Transverse colon (tissue), 4 donors: ENCODE measurements at regions of chr12 and their contacts with region 1.

Region 1: DNA sequence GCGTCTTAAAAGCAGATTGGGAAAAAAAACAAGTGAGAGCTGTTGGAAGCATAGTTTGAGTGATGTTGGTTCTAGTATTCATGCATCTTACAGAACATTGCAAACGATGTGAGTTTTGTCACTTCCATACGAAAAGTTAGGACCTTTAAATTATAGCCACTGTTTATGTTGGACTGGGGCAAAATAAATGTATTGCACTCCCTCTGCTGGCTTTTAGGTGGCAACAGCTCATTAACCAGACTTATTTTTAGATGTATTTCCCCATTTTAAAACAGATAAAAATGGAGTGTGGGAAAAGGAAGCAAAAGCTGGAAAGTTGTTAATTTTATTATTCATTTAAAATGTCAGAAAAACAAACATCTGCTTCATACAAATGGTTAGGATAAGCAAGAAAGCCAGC is 111.9 kb downstream of the LGR5 start:
- DNase-seq: no peak
- H3K4me3 ChIP-seq: no peak overlapping the region
- H3K27ac ChIP-seq: no peak overlapping the region
- H3K4me1 ChIP-seq: no peaks in the 10 kb centered on the region
- H3K27me3 ChIP-seq: no peaks in the 10 kb centered on the region
- CTCF ChIP-seq: peak in 4 of 5 experiments; percentile 13 to 28 (median 15)
- EP300 ChIP-seq: no peak
- POLR2A ChIP-seq: no peak

Region 2: GRCh38 chr12:71415336-71416231 is 135.9 kb before region 1 on chr12:
- in situ Hi-C with region 1: loop called in 1 of 4 experiments (anchors 10 kb)
- intact Hi-C with region 1: no loop called
- DNase-seq: peak; percentile 11
- H3K4me3 ChIP-seq: no peak overlapping the region
- H3K27ac ChIP-seq: no peak overlapping the region
- H3K4me1 ChIP-seq: peaks cover 0 to 2% (median 0%) of the 10 kb centered on the region in 4 donors
- H3K27me3 ChIP-seq: no peaks in the 10 kb centered on the region
- CTCF ChIP-seq: peak; percentile 59 to 75 (median 63)
- EP300 ChIP-seq: no peak
- POLR2A ChIP-seq: no peak

Region 3: DNA sequence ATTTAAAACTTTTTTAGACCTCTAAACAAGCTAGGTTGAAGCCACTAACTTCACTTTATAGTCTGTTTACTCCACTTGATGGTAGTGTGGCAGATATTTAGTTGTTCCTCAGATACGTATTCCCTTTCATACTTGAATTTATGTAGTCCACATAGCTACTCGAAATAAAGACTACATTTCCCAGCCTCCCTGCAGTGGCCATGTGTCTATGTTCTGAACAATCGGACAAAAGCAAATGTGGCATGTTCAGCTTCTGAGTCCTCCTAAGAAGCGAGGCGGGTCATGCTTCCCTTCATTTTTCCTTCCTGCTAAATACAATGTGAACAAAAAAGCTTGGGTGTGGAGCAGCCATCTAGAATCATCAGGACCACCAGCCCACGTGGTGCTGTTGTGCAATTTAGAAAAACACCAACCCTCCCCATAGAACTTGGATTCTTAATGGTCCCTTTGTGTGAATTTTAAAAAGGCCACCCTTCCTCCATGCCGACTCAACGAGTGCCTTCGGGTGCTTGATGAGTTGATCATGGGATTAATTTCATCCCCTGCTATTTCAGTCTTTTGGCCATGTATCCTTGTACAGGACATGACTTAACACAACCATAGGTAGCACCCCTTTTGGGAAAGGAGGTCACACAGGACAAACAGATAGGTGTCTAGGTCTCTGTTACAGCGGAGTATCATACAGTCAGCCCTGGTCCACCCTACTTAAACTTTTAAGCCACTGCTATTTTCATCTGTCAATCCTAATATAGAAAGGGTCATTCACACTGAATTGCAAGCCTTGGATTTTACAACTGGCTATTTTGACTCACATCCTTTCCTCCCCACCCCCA is 51.4 kb after region 1 on chr12:
- in situ Hi-C with region 1: no loop called
- intact Hi-C with region 1: no loop called
- DNase-seq: no peak
- H3K4me3 ChIP-seq: no peak overlapping the region
- H3K27ac ChIP-seq: no peak overlapping the region
- H3K4me1 ChIP-seq: no peaks in the 10 kb centered on the region
- H3K27me3 ChIP-seq: no peaks in the 10 kb centered on the region
- CTCF ChIP-seq: no peak
- EP300 ChIP-seq: no peak
- POLR2A ChIP-seq: no peak